Lower leg skin (tissue), 4 donors: ENCODE measurements at regions of chr12 and their contacts with region 1.

Region 1: DNA sequence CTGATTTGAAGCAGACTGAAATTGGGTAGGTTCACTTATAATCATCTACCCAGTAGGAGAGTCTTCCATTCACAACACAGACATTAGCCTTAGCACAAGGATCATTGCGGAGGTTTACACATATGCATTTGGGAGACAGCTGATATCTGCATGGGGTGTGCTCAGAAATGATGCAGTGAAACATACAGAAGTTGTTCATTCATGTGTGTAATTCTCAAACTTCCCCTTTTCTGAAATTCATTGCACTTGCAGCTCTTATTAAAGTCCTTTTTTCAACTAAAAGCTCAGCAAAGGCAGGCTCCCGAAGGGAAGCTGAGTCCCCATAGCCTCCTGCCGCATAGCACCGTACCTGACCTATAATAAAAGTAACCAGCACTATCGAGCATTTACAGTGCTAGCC is 218.3 kb upstream of the CRY1 start:
- DNase-seq: no peak
- H3K4me3 ChIP-seq: no peak overlapping the region
- CTCF ChIP-seq: no peak
- POLR2A ChIP-seq: no peak

Region 2: GRCh38 chr12:107359342-107359741 is 47.7 kb after region 1 on chr12:
- intact Hi-C with region 1: loop called (anchors 1 kb)
- DNase-seq: no peak
- H3K4me3 ChIP-seq: no peak overlapping the region
- CTCF ChIP-seq: no peak
- POLR2A ChIP-seq: no peak

Region 3: GRCh38 chr12:108047071-108047550 is 735.4 kb after region 1 on chr12:
- intact Hi-C with region 1: no loop called
- DNase-seq: no peak
- H3K4me3 ChIP-seq: no peak overlapping the region
- CTCF ChIP-seq: no peak
- POLR2A ChIP-seq: no peak